ENCODE measurements at regions of chr6 and their contacts with region 1.

Region 1: DNA sequence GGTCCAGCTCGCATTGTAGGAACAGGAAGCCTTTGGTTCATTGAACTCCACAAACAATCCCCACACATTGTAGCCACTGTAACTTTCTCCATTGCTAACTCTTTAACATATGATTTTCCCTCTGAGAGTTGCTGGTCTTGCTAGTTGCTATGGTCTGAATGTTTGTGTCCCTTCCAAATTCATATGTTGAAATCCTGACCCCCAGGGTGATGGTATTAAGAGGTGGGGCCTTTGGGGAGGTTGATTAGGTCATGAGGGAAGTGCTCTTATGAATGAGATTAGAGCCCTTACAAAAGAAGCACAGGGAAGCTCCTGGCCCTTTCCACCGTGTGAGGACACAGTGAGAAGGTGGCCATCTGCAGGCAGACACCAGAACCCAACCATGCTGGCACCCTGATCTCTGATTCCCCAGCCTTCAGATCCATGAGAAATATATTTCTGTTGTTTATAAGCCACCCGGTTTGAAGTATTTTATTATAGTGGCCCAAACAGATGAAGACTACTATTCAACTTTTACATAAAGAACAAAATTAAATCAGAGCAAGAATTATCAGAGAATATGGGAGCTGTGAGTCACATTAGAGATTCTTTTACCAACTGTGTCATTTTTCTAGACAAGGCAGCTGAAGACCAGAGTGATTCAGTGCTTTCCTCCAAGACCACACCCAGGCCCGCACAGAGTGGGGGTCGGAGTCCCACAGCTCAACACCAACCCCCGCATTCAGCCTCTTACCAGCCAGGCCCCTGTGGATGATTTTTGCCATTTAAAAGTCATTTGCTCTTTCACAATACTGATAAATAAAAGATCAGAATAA is 143.0 kb downstream of the SAMD5 start:
- DNase-seq: peak in 1 of 2 donors; percentile 11
- ATAC-seq: peak; percentile 30 to 39
- H3K4me3 ChIP-seq: no peak overlapping the region
- H3K27ac ChIP-seq: no peak overlapping the region
- H3K4me1 ChIP-seq: no peaks in the 10 kb centered on the region
- H3K27me3 ChIP-seq: no peaks in the 10 kb centered on the region
- CTCF ChIP-seq: no peak
- POLR2A ChIP-seq: no peak

Region 2: GRCh38 chr6:147506704-147507114 is 144.7 kb before region 1 on chr6:
- in situ Hi-C with region 1: no loop called
- intact Hi-C with region 1: loop called (anchors 2 kb)
- DNase-seq: no peak
- ATAC-seq: peak in 1 of 2 donors; percentile 49
- H3K4me3 ChIP-seq: peak overlapping the region; percentile 57 to 69 (median 60)
- H3K27ac ChIP-seq: no peak overlapping the region
- H3K4me1 ChIP-seq: peaks cover 8 to 20% of the 10 kb centered on the region in 2 donors
- H3K27me3 ChIP-seq: peaks cover 27 to 46% (median 37%) of the 10 kb centered on the region in 3 donors
- CTCF ChIP-seq: peak; percentile 41 to 78 (median 68)
- POLR2A ChIP-seq: no peak

Region 3: GRCh38 chr6:147586044-147586443 is 65.4 kb before region 1 on chr6:
- in situ Hi-C with region 1: no loop called
- intact Hi-C with region 1: no loop called
- DNase-seq: no peak
- ATAC-seq: no peak
- H3K4me3 ChIP-seq: no peak overlapping the region
- H3K27ac ChIP-seq: no peak overlapping the region
- H3K4me1 ChIP-seq: no peaks in the 10 kb centered on the region
- H3K27me3 ChIP-seq: no peaks in the 10 kb centered on the region
- CTCF ChIP-seq: no peak
- POLR2A ChIP-seq: no peak